GM18951 (cell line): ENCODE measurements at regions of chr16 and their contacts with region 1.

Region 1: DNA sequence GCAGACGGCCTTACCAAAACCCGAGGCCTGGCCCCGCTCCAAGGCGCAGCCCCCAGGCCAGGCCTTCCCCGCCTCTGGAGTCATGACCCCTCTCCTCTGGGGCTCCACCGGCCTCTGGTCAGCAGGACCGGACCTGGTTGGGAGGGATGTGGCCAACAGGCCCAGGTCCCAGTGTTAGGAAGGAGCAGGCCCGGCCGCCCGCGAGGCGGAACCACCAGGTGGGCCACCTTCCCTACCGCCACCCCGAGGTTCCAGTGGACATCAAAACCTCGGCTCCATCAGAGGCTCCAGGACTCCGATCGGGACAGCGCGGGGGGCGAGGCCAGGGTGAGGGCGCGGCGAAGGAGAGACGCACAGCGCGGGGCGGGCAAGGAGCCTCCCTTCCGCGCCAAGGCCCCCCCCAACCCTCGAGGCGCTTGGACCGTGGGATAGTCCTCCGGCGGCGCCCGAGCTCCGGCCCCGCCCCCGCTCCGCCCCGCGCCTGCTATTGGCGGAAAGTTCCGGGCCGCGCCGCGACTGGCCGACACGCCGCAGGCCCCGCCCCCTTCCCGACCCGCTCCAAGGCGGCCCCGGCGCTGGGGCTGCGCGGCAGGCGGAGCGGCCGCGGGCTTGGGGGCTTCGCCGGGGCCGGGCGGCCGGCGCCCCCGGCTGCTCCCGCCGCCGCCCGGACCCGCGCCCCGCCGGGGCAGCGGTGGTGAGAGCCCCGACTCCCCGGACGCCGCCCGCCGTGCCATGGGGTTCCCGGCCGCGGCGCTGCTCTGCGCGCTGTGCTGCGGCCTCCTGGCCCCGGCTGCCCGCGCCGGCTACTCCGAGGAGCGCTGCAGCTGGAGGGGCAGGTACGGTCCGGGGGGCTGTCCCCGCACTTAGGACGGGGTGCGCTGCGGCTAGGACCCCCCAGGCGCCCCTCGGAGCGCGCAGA is at the start of gene METRN:
- POLR2A ChIP-seq: peak; percentile 16

Region 2: DNA sequence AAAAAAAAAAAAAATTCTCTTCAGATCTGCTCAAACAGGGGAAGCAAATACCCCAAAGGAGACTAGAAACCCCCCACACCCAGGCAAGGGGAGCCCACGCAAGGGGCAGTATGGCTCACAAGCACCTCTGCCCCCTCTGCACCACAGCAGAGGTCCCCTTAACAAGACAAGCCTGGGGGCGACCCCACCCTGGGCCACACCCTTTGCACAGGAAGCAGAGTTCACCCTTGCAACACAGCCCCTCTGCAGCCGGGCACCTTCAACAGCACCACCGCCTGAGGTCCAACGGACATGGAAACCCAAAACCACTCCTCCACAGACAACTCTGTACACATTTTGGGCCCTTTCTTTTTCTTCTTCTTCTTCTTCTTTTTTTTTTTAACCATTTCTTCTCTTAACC is 375.1 kb before region 1 on chr16:
- in situ Hi-C with region 1: no loop called
- POLR2A ChIP-seq: no peak

Region 3: DNA sequence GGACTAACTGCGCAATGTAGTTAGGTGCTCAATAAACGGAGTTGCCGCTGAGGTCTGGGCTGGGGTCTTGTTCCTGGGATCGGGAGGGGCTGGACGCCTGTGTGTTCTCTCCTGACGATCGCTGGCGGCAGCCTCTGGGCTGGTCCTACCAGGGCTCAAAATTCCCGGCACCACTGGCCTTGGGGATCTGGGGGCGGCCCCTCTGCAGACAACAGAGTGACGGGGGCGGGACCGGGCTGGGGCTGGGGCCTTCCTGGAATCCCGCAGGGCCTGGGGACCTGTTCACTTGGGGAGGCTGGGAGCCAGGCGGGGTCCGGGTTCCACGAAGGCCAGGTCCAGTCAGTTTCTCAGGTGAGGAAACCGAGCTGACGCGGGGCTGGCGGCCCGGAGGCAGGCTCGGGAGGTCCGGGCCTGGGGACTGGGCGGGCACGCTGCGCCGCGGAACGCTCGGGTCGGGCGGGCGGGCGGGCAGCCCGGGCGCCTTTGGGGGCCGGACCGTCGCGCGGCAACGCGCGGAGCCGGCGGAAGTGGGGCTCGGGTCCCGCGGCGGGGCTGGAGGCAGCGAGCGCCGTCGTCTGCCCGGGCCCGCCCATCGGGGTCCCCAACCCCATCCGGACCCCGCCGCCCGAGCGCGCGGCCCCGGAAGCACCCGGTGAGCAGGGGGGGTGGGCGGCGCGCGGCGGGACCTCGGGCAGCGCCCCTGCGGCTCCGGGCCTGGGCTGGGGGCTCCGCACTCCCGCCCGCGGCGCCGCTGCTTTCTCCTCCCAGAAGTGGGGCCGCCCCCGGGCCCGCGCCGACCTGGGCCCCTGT is 145.2 kb before region 1 on chr16 and contains the start of gene PIGQ:
- in situ Hi-C with region 1: no loop called
- POLR2A ChIP-seq: peak; percentile 60

Region 4: DNA sequence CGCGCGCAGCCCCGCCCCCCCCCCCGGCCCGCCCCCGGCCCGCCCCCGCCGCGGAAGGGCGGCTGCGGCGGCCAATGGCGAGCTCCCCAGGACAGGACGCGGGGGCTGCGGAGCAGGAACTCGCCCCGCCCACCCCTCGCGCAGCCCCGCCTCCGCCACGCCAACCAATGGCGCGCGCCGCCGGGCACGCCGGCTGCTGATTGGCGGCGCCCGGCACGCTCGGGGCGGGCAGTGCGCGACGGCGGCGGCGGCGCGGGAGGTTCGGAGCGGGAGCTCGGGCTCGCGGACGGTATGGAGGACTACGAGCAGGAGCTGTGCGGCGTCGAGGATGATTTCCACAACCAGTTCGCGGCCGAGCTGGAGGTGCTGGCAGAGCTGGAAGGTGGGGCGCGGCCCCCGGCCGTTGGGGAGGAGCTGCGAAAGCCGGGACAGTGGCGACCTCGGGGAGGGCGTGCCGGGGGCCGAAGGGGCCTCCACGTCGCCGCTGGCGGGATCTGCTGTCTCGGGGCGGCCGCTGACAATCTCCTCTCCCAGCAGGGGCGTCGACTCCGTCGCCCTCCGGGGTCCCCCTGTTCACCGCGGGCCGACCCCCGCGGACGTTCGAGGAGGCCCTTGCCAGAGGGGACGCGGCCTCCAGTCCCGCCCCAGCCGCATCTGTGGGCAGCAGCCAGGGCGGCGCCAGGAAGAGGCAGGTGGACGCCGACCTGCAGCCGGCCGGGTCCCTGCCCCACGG is 73.7 kb after region 1 on chr16 and contains the start of gene CHTF18:
- in situ Hi-C with region 1: loop called (anchors 10 kb)
- POLR2A ChIP-seq: peak; percentile 72